Endothelial cell of umbilical vein (primary cell): ENCODE measurements at regions of chr1 and their contacts with region 1.

Region 1: GRCh38 chr1:109282952-109283747 is at the start of gene PSRC1:
- DNase-seq: peak; percentile 96
- H3K4me3 ChIP-seq: peak within 1 kb of the TSS; percentile 61 to 81 (median 71)
- H3K27ac ChIP-seq: peak within 1 kb of the TSS; percentile 22
- H3K4me1 ChIP-seq: peaks cover 22% of the 10 kb centered on the region
- H3K27me3 ChIP-seq: no peaks in the 10 kb centered on the region
- CTCF ChIP-seq: peak; percentile 20 to 63
- POLR2A ChIP-seq: no peak
- total RNA-seq, gene PSRC1: 23.4 and 29.3 TPM in 2 replicates

Region 2: DNA sequence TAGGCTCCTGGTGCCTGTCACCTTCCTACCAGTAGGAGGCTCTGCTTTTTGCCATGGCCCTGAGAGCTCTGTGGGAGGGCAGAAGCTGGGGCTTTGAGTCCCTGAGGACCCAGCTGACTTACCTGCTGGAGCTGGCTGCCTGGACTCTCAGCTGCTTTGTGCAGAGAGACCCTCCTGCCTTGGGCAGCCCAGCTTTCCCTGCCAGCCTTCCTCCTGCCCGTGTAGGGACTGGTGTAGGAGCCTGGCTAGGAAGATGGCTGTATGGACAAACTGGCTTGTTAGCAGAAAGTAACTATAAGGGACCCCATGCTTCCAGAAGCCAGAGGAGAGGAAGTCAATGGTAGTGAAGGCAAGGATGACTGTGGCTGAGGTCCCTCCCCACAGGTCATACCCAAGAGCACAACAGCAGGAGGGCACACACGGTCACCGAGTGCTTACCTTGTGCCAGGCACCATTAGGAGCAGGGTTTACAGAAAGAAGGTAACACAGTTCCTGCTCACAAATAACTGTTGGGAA is 43.5 kb before region 1 on chr1:
- CTCF ChIA-PET with region 1: no interaction called
- POLR2A ChIA-PET with region 1: no interaction called
- dilution Hi-C with region 1: no loop called
- intact Hi-C with region 1: loop called (anchors 1 kb)
- DNase-seq: peak; percentile 18
- H3K4me3 ChIP-seq: no peak overlapping the region
- H3K27ac ChIP-seq: no peak overlapping the region
- H3K4me1 ChIP-seq: no peaks in the 10 kb centered on the region
- H3K27me3 ChIP-seq: peaks cover 12 to 17% of the 10 kb centered on the region in 2 experiments
- CTCF ChIP-seq: peak; percentile 44 to 47
- POLR2A ChIP-seq: no peak

Region 3: DNA sequence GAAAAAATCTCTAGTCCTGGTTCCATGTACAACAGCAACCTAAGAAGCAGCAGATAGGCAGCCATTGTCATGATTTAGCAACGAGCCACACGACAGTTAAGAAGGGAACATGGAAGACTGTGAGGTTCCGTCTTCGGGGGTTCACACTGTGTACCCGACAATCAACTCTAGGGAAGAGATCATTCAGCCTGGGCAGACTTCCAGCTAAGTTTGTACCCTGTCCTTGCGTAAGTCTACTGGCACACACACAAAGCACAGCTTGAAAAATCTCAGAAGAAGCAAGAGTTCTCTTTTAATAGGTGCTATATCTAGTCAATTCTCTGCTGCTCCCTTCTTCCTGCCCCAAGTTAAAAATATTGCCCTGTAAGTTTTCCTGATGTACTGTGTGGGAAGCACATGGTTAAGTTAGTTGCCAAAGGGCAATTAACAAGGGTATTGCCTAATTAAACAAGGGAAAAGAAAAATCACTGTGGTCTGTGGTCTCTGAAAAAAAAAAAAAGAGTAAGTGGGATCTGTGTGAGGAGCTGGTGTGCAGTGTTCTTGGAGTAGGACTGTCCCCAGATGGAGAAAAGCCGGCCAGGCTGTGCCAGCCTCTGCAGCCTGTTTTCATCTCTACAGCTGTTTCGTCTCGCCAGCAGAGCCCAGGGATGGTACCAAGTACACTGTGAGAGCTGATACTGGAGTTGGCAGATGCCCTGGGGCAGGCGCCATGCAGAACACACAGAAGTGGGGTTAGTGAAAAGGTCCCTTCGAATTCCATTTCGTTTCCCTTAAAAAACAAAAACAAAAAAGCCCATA is 30.0 kb after region 1 on chr1:
- CTCF ChIA-PET with region 1: no interaction called
- POLR2A ChIA-PET with region 1: no interaction called
- dilution Hi-C with region 1: no loop called
- intact Hi-C with region 1: no loop called
- DNase-seq: no peak
- H3K4me3 ChIP-seq: no peak overlapping the region
- H3K27ac ChIP-seq: no peak overlapping the region
- H3K4me1 ChIP-seq: no peaks in the 10 kb centered on the region
- H3K27me3 ChIP-seq: peaks cover 4 to 6% of the 10 kb centered on the region in 2 experiments
- CTCF ChIP-seq: no peak
- POLR2A ChIP-seq: no peak